ENCODE measurements at regions of chr11 and their contacts with region 1.

Region 1: DNA sequence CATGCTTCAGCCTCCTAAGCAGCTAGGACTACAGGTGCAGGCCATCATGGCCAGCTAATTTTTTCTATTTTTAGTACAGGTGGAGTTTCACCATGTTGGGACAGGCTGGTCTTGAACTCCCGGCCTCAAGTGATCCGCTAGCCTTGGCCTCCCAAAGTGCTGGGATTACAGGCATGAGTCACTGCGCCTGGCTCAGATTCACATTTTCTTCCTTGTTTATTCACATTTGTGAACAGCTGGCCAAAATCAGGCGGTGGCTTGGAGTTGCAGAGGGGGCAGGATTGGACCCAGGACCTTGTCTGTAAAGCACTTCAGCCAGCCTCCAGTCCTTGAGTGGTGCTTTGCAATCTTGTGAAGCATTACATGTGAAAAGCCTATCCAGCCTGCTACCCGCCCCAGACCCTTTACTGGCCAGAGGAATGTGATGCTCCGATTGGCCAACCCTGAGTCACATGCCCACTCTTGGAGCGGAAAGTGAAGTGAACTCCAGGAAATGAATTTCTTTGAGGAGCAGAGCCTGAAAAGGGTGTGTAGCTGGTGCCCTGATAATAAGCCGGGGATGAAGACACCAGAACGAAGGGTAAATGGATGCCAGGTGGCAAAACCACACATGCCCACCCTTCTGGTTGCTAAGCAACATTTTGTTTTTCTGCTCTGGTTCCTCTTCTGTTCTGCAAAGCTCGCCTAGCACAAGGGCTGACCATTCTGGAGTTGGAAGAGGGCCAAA is 62.6 kb upstream of the PTPRJ start:
- DNase-seq: peak; percentile 82
- H3K4me3 ChIP-seq: no peak overlapping the region
- H3K27ac ChIP-seq: peak overlapping the region; percentile 63
- H3K4me1 ChIP-seq: peaks cover 39% of the 10 kb centered on the region
- H3K27me3 ChIP-seq: no peaks in the 10 kb centered on the region
- CTCF ChIP-seq: no peak
- POLR2A ChIP-seq: peak; percentile 42

Region 2: GRCh38 chr11:47766305-47767227 is 151.2 kb before region 1 on chr11:
- CTCF ChIA-PET with region 1: no interaction called
- POLR2A ChIA-PET with region 1: no interaction called
- dilution Hi-C with region 1: no loop called
- intact Hi-C with region 1: loop called (anchors 5 kb)
- DNase-seq: peak; percentile 73
- H3K4me3 ChIP-seq: peak overlapping the region; percentile 61 to 97 (median 62)
- H3K27ac ChIP-seq: peak overlapping the region; percentile 81
- H3K4me1 ChIP-seq: peaks cover 14% of the 10 kb centered on the region
- H3K27me3 ChIP-seq: no peaks in the 10 kb centered on the region
- CTCF ChIP-seq: no peak
- POLR2A ChIP-seq: no peak

Region 3: GRCh38 chr11:47858169-47858543 is 59.6 kb before region 1 on chr11:
- CTCF ChIA-PET with region 1: no interaction called
- POLR2A ChIA-PET with region 1: no interaction called
- dilution Hi-C with region 1: no loop called
- intact Hi-C with region 1: loop called (anchors 5 kb)
- DNase-seq: peak; percentile 57
- H3K4me3 ChIP-seq: no peak overlapping the region
- H3K27ac ChIP-seq: no peak overlapping the region
- H3K4me1 ChIP-seq: peaks cover 10% of the 10 kb centered on the region
- H3K27me3 ChIP-seq: no peaks in the 10 kb centered on the region
- CTCF ChIP-seq: no peak
- POLR2A ChIP-seq: no peak

Region 4: DNA sequence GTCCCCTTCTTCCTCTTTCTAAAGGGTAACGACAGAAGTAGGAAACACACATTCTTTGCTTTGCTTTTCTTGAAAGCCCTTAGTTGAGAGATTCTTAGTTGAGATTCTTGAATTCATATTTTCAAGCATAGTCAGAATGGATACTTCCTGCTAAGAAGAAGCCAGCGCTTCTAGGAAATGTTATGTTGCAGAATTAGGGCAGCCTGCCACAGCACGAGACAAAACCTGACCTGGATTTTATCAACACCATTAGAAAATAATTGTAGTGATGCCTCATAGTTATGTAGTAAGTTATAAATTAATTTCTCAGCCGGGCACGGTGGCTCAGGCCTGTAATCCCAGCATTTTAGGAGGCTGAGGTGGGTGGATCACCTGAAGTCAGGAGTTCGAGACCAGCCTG is 31.7 kb before region 1 on chr11:
- CTCF ChIA-PET with region 1: no interaction called
- POLR2A ChIA-PET with region 1: no interaction called
- dilution Hi-C with region 1: no loop called
- intact Hi-C with region 1: loop called (anchors 1 kb)
- DNase-seq: peak; percentile 87
- H3K4me3 ChIP-seq: no peak overlapping the region
- H3K27ac ChIP-seq: peak overlapping the region; percentile 9
- H3K4me1 ChIP-seq: peaks cover 18% of the 10 kb centered on the region
- H3K27me3 ChIP-seq: no peaks in the 10 kb centered on the region
- CTCF ChIP-seq: no peak
- POLR2A ChIP-seq: no peak

Region 5: DNA sequence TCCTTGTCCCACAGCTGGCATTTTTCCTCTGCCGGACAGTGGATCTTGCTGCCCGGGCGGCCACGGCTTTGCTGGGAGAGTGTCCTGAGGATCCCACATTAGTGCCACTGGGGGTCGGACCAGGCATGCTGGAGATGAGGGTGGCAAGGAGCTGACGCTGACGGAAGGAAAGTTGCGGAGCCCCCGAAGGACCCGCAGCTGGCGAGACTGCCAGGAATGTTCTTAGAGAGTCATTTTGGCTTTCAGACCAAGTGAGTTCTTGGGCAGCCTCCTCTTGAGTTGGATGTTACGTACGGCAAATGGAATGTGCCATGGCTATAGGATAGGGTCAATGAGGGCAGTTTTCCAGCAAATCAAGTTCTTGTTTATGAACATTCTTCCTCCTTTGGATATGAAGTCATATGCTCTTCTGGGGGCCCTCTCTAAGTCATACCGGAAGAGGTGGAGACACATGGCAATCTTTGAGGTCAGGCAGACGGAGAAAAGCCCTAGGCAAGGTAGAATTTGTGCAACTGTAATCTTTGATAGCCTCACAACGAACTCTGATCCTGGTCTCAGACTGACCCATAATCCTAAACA is 12.2 kb before region 1 on chr11:
- CTCF ChIA-PET with region 1: no interaction called
- POLR2A ChIA-PET with region 1: no interaction called
- dilution Hi-C with region 1: no loop called
- intact Hi-C with region 1: loop called (anchors 1 kb)
- DNase-seq: peak; percentile 97
- H3K4me3 ChIP-seq: no peak overlapping the region
- H3K27ac ChIP-seq: peak overlapping the region; percentile 95
- H3K4me1 ChIP-seq: peaks cover 15% of the 10 kb centered on the region
- H3K27me3 ChIP-seq: no peaks in the 10 kb centered on the region
- CTCF ChIP-seq: no peak
- POLR2A ChIP-seq: peak; percentile 63